Caco-2 (cell line): ENCODE measurements at regions of chr18 and their contacts with region 1.

Region 1: GRCh38 chr18:23662309-23663263 is at the start of gene ANKRD29:
- DNase-seq: peak in 1 of 2 experiments; percentile 61
- H3K4me3 ChIP-seq: peak within 1 kb of the TSS; percentile 76
- H3K4me3 Mint-ChIP-seq: peak within 1 kb of the TSS; percentile 81
- H3K27ac Mint-ChIP-seq: peak within 1 kb of the TSS; percentile 71
- H3K4me1 ChIP-seq: no peaks in the 10 kb centered on the region
- H3K4me1 Mint-ChIP-seq: peaks cover 21% of the 10 kb centered on the region
- H3K27me3 ChIP-seq: no peaks in the 10 kb centered on the region
- H3K27me3 Mint-ChIP-seq: no peaks in the 10 kb centered on the region
- CTCF ChIP-seq: no peak
- total RNA-seq, gene ANKRD29: 7.3 and 8.2 TPM in 2 replicates

Region 2: DNA sequence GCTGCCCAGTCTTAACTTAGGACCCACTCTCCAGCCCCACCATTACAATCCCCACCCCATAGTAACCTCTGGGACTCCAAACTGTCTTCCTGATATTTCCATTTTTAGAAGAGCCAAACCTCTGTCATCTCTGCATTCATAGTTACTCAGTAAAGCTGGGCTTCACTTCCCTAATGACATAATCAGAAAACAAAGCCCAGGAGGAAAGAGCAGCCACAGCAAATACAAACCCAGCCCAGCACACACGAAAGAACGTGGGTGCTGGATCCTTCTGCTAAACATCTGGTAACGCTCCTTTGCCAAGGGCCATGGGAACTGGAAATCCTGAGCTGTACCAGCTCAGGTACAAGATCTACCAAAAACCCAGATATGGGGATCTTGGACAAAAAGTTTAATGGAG is 246.3 kb before region 1 on chr18:
- CTCF ChIA-PET with region 1: no interaction called
- POLR2A ChIA-PET with region 1: no interaction called
- intact Hi-C with region 1: no loop called
- DNase-seq: no peak
- H3K4me3 ChIP-seq: no peak overlapping the region
- H3K4me3 Mint-ChIP-seq: no peak overlapping the region
- H3K27ac Mint-ChIP-seq: no peak overlapping the region
- H3K4me1 ChIP-seq: no peaks in the 10 kb centered on the region
- H3K4me1 Mint-ChIP-seq: no peaks in the 10 kb centered on the region
- H3K27me3 ChIP-seq: no peaks in the 10 kb centered on the region
- H3K27me3 Mint-ChIP-seq: no peaks in the 10 kb centered on the region
- CTCF ChIP-seq: no peak

Region 3: DNA sequence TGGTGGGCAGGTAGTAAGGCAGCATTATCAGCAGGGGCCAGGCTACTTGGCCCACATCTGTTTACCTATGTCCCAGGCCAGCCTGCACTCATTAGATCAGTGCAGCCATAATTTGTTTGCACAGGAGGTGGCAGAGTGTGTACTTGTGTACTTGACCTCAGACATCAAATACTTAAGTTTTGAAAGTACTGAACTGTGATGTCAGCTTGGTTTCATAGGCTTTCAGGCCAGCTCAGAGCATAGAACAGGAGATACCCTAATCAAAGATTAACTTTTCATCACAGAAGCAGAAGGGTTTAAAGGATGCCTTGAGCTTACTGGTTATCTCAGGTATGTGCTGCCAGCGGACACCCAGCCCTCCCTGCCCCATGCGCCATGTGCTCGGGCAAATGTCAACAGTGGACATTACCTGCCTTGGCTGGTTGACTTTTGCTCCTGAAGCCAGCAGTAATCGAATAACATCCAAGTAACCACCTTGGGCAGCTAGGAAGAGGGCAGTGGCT is 33.1 kb before region 1 on chr18:
- CTCF ChIA-PET with region 1: no interaction called
- POLR2A ChIA-PET with region 1: no interaction called
- intact Hi-C with region 1: loop called (anchors 1 kb)
- DNase-seq: peak; percentile 50 to 58
- H3K4me3 ChIP-seq: no peak overlapping the region
- H3K4me3 Mint-ChIP-seq: no peak overlapping the region
- H3K27ac Mint-ChIP-seq: no peak overlapping the region
- H3K4me1 ChIP-seq: peaks cover 10% of the 10 kb centered on the region
- H3K4me1 Mint-ChIP-seq: no peaks in the 10 kb centered on the region
- H3K27me3 ChIP-seq: no peaks in the 10 kb centered on the region
- H3K27me3 Mint-ChIP-seq: no peaks in the 10 kb centered on the region
- CTCF ChIP-seq: no peak

Region 4: GRCh38 chr18:23871410-23871809 is 208.8 kb after region 1 on chr18:
- CTCF ChIA-PET with region 1: no interaction called
- POLR2A ChIA-PET with region 1: no interaction called
- intact Hi-C with region 1: no loop called
- DNase-seq: no peak
- H3K4me3 ChIP-seq: no peak overlapping the region
- H3K4me3 Mint-ChIP-seq: no peak overlapping the region
- H3K27ac Mint-ChIP-seq: no peak overlapping the region
- H3K4me1 ChIP-seq: no peaks in the 10 kb centered on the region
- H3K4me1 Mint-ChIP-seq: no peaks in the 10 kb centered on the region
- H3K27me3 ChIP-seq: no peaks in the 10 kb centered on the region
- H3K27me3 Mint-ChIP-seq: no peaks in the 10 kb centered on the region
- CTCF ChIP-seq: no peak